Esophagus muscularis mucosa (tissue), 4 donors: ENCODE measurements at regions of chr13 and their contacts with region 1.

Region 1: GRCh38 chr13:33659466-33659865 is 158.5 kb upstream of the RFC3 start:
- DNase-seq: peak; percentile 21
- H3K4me3 ChIP-seq: no peak overlapping the region
- H3K27ac ChIP-seq: no peak overlapping the region
- H3K4me1 ChIP-seq: no peaks in the 10 kb centered on the region
- H3K27me3 ChIP-seq: no peaks in the 10 kb centered on the region
- CTCF ChIP-seq: no peak
- EP300 ChIP-seq: no peak
- POLR2A ChIP-seq: no peak

Region 2: GRCh38 chr13:33634546-33634982 is 24.9 kb before region 1 on chr13:
- intact Hi-C with region 1: no loop called
- DNase-seq: no peak
- H3K4me3 ChIP-seq: no peak overlapping the region
- H3K27ac ChIP-seq: no peak overlapping the region
- H3K4me1 ChIP-seq: peaks cover 4 to 9% (median 6%) of the 10 kb centered on the region in 4 donors
- H3K27me3 ChIP-seq: no peaks in the 10 kb centered on the region
- CTCF ChIP-seq: no peak
- EP300 ChIP-seq: no peak
- POLR2A ChIP-seq: no peak

Region 3: GRCh38 chr13:33710924-33711323 is 51.5 kb after region 1 on chr13:
- intact Hi-C with region 1: loop called (anchors 5 kb)
- DNase-seq: no peak
- H3K4me3 ChIP-seq: no peak overlapping the region
- H3K27ac ChIP-seq: no peak overlapping the region
- H3K4me1 ChIP-seq: peaks cover 0 to 4% (median 0%) of the 10 kb centered on the region in 4 donors
- H3K27me3 ChIP-seq: no peaks in the 10 kb centered on the region
- CTCF ChIP-seq: no peak
- EP300 ChIP-seq: no peak
- POLR2A ChIP-seq: no peak

Region 4: DNA sequence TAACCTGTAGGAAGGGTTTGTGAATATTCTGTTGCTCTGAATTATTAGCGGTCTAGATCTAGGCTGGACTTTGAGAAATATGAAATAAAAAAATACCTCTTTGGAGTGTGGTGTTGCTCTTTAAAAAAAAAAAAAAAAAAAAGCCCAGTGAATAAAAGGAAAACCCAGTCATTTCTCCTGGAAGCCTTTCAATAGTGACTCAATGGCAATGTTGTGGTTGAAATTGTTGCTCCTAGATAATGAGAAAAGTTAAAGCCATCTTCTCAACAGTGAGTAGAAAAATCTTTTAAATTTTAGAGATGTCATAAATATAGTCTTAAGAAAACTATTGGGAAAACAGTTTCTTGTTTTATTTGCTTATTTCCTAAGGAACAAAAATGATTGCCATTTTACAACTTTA is 293.7 kb after region 1 on chr13:
- intact Hi-C with region 1: no loop called
- DNase-seq: no peak
- H3K4me3 ChIP-seq: no peak overlapping the region
- H3K27ac ChIP-seq: no peak overlapping the region
- H3K4me1 ChIP-seq: no peaks in the 10 kb centered on the region
- H3K27me3 ChIP-seq: no peaks in the 10 kb centered on the region
- CTCF ChIP-seq: no peak
- EP300 ChIP-seq: no peak
- POLR2A ChIP-seq: no peak

Region 5: DNA sequence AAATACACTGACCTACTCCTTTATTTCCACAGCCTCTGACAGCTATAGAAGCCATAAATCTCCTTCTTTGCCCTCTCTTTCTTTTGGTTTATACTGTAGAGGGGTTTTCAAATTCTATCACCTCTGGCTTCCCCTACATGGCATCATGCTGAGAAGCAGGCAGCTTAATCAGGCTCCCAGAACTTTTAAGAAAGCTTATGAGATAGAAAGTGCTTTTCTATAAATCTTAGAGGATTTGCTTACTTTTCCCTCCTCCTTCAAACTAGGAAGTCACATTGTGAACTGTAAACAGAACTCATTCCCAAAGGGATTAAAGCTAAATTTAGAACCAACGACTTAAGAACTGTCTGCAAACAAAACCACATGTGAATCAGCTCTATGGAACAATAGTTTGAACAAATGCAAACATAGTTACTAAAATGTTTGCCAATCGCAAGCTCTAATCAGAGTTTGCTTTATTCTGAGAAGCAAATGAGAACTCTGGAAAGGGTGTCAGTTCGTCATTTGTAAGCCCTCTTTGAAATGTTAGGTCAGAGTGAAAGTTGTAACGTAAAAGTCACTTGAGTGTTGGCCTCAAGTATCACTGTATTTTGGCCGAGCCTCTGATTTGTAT is 502.6 kb after region 1 on chr13:
- intact Hi-C with region 1: no loop called
- DNase-seq: no peak
- H3K4me3 ChIP-seq: peak overlapping the region; percentile 6 to 34 (median 22)
- H3K27ac ChIP-seq: peak overlapping the region; percentile 66 to 81 (median 74)
- H3K4me1 ChIP-seq: peaks cover 24 to 31% (median 27%) of the 10 kb centered on the region in 4 donors
- H3K27me3 ChIP-seq: no peaks in the 10 kb centered on the region
- CTCF ChIP-seq: no peak
- EP300 ChIP-seq: no peak
- POLR2A ChIP-seq: no peak